Cardiac septum (tissue), 1 donor: ENCODE measurements at regions of chr18 and their contacts with region 1.

Region 1: DNA sequence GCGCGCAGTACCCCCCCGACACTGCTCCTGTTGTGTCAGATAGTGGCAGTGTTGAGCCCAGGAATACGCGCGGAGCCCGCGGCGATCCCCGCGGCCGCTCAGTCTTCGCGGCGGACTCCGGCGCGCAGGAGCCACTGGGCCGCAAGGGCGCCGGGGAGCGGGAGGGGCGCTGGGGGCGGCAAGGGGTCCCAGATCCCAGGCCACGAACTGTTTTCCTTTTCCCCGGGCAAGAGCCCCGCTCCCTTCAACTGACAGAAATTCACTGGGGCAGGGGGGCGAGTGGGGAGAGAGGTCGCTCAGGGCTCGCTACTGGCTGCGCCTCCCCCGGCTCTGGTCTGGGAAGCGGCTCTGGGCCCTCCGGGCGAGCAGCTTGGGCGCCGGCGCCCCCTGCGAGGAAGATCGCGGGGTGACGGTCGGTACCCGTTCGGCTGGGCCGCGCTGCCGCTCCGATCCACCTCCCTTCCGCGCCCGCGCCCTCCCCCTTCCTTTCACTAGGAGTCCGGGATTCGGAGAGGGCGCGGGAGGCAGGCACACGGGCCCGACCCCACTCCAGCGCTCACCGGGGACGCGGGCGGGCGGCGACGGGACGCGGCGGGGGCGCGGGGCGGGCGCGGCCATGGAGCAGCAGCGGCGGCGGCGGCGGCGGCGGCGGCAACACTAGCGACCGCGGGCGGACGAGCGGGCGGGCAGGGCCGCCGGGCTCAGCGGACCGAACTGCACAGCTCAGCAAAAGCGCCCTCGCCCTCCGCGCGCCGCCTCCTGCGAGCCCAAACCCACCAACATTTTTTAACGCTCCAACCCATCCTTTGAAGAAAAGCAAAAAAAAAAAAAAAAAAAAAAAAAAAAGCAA is 1.4 kb upstream of the SETBP1 start:
- DNase-seq: peak; percentile 90

Region 2: GRCh38 chr18:43970656-43971055 is 708.6 kb before region 1 on chr18:
- intact Hi-C with region 1: no loop called
- DNase-seq: no peak

Region 3: DNA sequence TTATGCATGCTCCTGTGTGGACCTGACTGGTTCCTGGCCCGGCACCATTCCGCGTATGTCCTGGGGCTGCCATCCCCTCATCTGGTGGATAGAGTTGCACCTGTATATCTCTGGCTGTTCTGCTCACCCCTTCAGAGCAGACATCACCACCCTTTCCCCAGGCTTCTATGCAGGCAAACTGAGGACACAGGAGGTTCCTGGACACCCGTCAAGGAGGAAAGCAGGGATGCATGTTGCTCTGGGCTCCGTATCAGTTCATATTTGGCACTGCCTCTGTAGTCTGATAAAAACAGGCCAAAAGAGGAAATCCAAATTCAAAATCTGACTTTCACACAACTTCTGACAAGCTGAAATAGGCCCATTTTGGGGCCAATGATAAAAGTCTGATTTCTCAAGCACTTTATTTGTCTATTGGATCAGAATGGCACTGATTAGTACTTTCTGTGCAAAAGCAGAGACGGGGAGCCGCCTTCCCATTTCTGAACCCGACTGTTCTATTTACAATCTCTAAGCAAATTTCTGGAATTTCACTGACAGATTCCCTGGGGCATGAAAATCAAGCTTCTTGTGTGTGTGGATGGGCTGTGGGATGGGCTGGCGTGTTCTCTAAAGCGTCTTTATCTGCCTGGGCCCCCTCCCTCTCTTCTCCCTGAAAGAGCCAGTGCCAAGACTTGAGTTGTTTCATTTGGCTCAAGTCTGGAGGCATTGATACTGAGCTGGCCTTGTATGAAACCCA is 98.3 kb after region 1 on chr18:
- intact Hi-C with region 1: no loop called
- DNase-seq: no peak

Region 4: GRCh38 chr18:44789710-44790109 is 110.4 kb after region 1 on chr18:
- intact Hi-C with region 1: loop called (anchors 5 kb)
- DNase-seq: no peak

Region 5: DNA sequence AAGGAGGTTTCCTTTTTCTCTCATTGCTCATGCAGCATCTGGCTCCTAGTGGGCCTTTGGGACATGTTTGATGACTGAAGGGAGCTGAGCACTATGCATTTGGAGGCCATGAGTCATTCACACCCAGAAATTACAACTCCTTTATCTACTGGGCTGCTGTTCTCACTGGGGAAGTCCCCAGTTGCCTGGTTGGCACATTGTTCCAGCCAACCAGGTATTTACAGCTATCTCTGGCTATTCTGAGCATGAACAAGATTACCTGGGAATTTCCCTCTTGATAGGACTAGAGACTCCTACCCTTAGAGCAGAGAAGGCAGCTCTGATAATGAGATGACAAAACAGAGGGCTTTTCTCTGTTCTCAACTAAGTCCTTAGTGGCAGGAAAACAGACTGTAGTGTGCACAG is 207.9 kb after region 1 on chr18:
- intact Hi-C with region 1: loop called (anchors 2 kb)
- DNase-seq: no peak

Region 6: DNA sequence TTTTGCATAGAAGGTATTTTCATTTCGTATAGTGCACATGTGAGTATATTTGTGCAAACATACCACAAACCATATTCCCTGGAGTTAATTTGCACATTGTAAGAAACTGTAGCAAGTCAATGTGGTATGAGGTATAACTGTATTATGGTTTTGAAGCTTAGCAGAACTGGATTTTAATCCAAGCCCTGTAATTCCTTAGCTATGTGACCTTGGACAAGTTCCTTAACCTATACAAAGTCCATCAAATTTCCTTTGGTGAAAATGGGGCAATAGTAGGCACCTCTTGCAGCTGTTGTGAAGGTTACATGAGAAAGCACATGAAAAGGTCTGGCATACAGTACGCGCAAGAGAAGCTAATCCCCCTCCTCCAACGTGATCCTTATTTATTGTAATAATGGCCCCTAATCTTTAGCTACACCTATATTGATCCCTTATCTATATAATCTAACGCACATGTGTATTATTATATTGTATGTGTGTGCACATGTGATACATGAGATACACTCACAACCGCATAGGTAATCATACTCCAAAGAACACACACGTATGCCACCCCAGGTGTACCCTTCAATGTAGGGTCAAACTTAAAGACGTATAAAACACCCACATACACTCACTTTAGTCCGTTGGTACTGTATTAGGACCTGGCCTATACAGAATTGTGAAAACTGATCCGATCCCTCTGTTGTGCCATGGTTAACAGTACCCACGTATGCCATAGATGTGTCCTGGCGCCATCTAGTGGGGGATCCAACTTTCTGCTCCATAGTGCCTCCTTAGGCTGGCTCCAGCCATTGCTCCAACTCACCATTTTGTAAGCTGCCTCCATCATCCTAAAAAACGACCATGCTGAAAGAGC is 533.1 kb after region 1 on chr18:
- intact Hi-C with region 1: loop called (anchors 5 kb)
- DNase-seq: peak; percentile 86